Naive thymus-derived CD8-positive, alpha-beta T cell (primary cell): ENCODE measurements at regions of chr20 and their contacts with region 1.

Region 1: DNA sequence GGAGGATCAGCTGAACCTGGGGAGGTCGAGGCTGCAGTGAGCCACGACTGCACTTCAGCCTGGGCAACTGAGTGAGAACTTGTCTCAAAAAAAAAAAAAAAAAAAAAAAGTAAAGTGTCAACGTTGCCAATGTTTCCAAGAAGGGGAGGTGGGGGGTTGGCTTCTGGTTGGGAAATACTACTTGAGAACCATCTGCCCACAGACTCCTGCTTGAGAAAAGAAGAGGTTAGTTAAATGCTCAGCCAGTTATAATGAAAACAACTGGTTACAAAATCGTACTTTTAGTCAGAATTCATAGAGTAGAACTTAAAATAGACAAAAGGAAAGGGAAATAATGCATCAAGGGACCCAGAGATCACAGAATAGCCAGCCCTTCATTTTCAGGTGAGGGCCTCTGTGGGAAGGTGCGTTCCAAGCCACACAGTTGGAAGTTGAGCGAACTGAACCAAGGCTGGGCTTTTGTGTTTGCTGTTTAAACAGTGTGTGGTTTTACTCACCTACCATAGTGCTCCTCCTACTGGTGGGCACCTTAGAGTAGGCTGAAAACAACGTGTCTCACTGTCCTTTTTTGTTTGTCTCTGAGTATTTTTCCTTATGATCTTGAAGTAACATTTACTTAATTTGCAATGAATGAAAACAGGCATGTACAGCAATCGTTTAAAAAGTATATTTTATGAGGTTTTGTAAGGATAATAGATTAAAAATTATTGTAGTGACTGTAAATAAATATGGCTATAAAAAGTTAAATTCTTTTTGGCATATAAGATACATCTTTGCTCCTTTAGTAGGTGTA is 200.7 kb downstream of the BCAS1 start:
- DNase-seq: peak; percentile 15 to 87 (median 72)
- ATAC-seq: peak; percentile 63 to 65
- H3K4me3 Mint-ChIP-seq: peak overlapping the region in 9 of 10 donors; percentile 19 to 74 (median 56)
- H3K27ac Mint-ChIP-seq: peak overlapping the region; percentile 78 to 99 (median 93)
- H3K4me1 Mint-ChIP-seq: peaks cover 38 to 82% (median 75%) of the 10 kb centered on the region in 4 donors
- H3K27me3 Mint-ChIP-seq: peaks cover 0 to 2% (median 0%) of the 10 kb centered on the region in 5 donors

Region 2: DNA sequence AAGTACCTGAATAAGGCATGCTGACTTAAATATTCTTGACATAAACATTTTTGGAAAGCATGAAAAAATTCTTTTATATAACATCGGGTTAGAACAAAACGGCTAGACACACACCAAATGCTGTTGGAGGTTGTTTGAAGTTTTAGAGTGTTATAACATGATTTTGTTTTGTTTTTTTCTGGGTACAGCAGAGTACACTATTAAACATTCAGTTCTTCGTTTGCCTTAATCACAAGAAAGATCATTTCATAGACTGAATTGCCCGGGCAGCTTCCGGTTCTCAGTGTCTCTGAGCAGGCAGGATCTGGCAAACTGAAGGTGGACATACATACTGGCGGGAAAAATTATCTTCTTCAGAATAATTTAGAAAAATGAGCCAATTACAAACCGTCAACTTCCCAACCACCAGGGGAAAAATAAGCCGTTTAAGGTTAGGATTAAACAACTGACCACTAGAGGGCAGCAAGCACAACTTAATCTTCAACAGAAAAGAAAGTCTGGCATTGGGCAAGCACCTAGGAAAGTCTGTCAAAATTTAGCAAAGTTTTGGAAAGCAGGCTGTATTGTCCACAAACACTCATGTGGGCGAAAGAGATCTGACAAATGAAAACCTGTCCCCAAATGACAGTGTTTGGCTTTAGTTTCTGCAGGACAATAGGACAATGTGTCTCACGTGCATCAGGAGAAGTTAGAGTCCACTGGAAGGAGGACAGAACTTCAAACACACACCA is 291.0 kb before region 1 on chr20:
- POLR2A ChIA-PET with region 1: interaction called, 12 read pairs
- DNase-seq: peak in 9 of 10 donors; percentile 51 to 89 (median 74)
- ATAC-seq: peak; percentile 33 to 49
- H3K4me3 Mint-ChIP-seq: peak overlapping the region; percentile 79 to 94 (median 92)
- H3K27ac Mint-ChIP-seq: peak overlapping the region; percentile 91 to 99 (median 96)
- H3K4me1 Mint-ChIP-seq: peaks cover 31 to 94% (median 82%) of the 10 kb centered on the region in 4 donors
- H3K27me3 Mint-ChIP-seq: no peaks in the 10 kb centered on the region

Region 3: GRCh38 chr20:53708129-53708968 is 161.3 kb before region 1 on chr20:
- POLR2A ChIA-PET with region 1: interaction called, 23 read pairs
- DNase-seq: peak in 4 of 10 donors; percentile 16 to 39 (median 26)
- ATAC-seq: peak; percentile 58 to 66
- H3K4me3 Mint-ChIP-seq: peak overlapping the region; percentile 31 to 85 (median 71)
- H3K27ac Mint-ChIP-seq: peak overlapping the region; percentile 81 to 99 (median 96)
- H3K4me1 Mint-ChIP-seq: peaks cover 23 to 66% (median 53%) of the 10 kb centered on the region in 4 donors
- H3K27me3 Mint-ChIP-seq: no peaks in the 10 kb centered on the region

Region 4: GRCh38 chr20:53883098-53883811 is 13.6 kb after region 1 on chr20:
- POLR2A ChIA-PET with region 1: interaction called, 43 read pairs
- DNase-seq: no peak
- ATAC-seq: no peak
- H3K4me3 Mint-ChIP-seq: peak overlapping the region in 2 of 10 donors; percentile 15 to 33
- H3K27ac Mint-ChIP-seq: peak overlapping the region in 8 of 10 donors; percentile 53 to 100 (median 90)
- H3K4me1 Mint-ChIP-seq: peaks cover 21 to 62% (median 48%) of the 10 kb centered on the region in 4 donors
- H3K27me3 Mint-ChIP-seq: no peaks in the 10 kb centered on the region

Region 5: GRCh38 chr20:53899351-53900167 is 29.9 kb after region 1 on chr20:
- POLR2A ChIA-PET with region 1: interaction called, 30 read pairs
- DNase-seq: peak; percentile 20 to 83 (median 63)
- ATAC-seq: peak; percentile 98 to 100
- H3K4me3 Mint-ChIP-seq: peak overlapping the region in 9 of 10 donors; percentile 24 to 68 (median 49)
- H3K27ac Mint-ChIP-seq: peak overlapping the region in 9 of 10 donors; percentile 73 to 95 (median 90)
- H3K4me1 Mint-ChIP-seq: peaks cover 20 to 62% (median 53%) of the 10 kb centered on the region in 4 donors
- H3K27me3 Mint-ChIP-seq: no peaks in the 10 kb centered on the region

Region 6: GRCh38 chr20:53915446-53916172 is 45.9 kb after region 1 on chr20:
- POLR2A ChIA-PET with region 1: interaction called, 18 read pairs
- DNase-seq: peak; percentile 79 to 96 (median 90)
- ATAC-seq: peak; percentile 95 to 98
- H3K4me3 Mint-ChIP-seq: peak overlapping the region; percentile 93 to 98 (median 96)
- H3K27ac Mint-ChIP-seq: peak overlapping the region; percentile 90 to 95 (median 94)
- H3K4me1 Mint-ChIP-seq: peaks cover 23 to 42% (median 31%) of the 10 kb centered on the region in 4 donors
- H3K27me3 Mint-ChIP-seq: no peaks in the 10 kb centered on the region